HepG2 (cell line): ENCODE measurements at regions of chr3 and their contacts with region 1.

Region 1: GRCh38 chr3:128725932-128726690 is at the start of gene RAB7A:
- DNase-seq: peak; percentile 94
- ATAC-seq: peak; percentile 96
- H3K4me3 ChIP-seq: peak within 1 kb of the TSS; percentile 83 to 93 (median 92)
- H3K27ac ChIP-seq: peak within 1 kb of the TSS; percentile 84
- H3K4me1 ChIP-seq: peaks cover 53% of the 10 kb centered on the region
- H3K27me3 ChIP-seq: peaks cover 0 to 5% of the 10 kb centered on the region in 2 experiments; a peak in 1 of 5 replicates
- CTCF ChIP-seq: 0 out of 2 replicates have a peak, but pooled peaks have one; percentile 10
- EP300 ChIP-seq: no peak
- POLR2A ChIP-seq: peak; percentile 88 to 96
- RAD21 ChIP-seq: peak; percentile 32; the same call in 1 of the 2 replicates
- total RNA-seq, gene RAB7A: 26.5 and 49.0 TPM in 2 replicates

Region 2: DNA sequence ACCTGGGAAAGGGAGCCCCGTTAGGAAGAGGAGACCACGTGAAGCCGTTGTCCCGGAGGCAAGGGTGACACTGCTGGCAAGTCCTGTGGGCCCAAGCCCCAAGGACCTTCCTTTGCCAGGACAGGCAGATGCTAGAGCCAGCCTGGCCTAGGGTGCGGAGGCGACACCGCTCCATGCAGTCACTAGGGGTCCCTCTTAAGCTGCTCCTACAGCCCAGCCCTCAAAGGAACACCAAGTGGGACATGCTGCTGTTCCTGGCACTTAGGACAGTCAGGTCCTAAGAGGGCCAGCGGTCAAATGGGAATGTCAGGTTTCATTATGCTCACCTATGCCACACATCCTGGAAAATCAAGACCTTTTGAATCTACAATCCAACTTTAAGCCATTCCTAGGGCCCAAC is 135.2 kb before region 1 on chr3:
- CTCF ChIA-PET with region 1: no interaction called
- POLR2A ChIA-PET with region 1: no interaction called
- in situ Hi-C with region 1: no loop called
- intact Hi-C with region 1: no loop called
- DNase-seq: peak; percentile 58
- ATAC-seq: peak; percentile 98
- H3K4me3 ChIP-seq: no peak overlapping the region
- H3K27ac ChIP-seq: no peak overlapping the region
- H3K4me1 ChIP-seq: peaks cover 19% of the 10 kb centered on the region
- H3K27me3 ChIP-seq: peaks cover 0 to 2% of the 10 kb centered on the region in 2 experiments; a peak in 2 of 5 replicates
- CTCF ChIP-seq: peak; percentile 97
- EP300 ChIP-seq: no peak
- POLR2A ChIP-seq: no peak
- RAD21 ChIP-seq: peak; percentile 91

Region 3: DNA sequence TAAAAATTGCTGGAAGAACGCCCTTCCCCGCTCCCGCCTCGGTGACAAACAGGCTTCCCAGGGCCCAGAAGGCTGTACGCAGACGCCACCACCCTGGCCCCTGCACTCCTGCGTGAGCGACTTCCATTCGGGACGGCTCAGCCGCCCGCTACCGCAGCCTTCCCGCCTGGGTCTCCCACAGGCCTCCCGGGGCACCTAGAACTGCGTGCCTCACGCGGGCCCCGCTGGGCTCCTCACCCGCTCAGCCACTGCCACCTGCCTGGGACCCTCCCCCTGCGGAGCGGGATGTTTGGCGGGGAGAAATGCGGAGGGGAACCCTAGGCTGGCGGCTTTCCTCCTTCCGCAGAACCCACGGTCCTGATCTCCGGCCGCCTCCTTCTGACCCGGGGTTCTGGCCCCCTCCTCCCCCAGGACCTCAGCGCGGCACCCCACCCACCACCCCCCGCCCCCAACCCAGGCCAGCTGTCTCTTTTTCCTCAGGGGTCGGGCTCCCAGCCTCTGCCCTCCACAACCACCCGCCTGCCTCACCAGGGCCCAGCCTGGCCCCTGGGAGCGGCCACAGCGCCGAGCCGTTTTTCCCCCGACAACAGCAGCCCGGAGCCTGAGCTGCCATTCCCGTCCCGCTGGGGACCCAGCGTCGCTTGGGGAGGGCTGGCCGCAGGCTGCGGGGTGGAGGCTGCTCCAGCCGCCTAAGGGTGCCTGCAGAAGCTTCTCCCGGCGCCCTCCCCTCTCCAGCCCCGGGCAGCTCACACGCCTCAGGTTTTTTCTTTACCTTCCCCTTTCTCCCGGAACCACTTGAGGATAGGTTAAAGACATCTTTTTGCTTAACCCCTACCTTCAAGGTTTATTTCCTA is 27.7 kb before region 1 on chr3:
- CTCF ChIA-PET with region 1: no interaction called
- POLR2A ChIA-PET with region 1: no interaction called
- in situ Hi-C with region 1: no loop called
- intact Hi-C with region 1: no loop called
- DNase-seq: no peak
- ATAC-seq: peak; percentile 89
- H3K4me3 ChIP-seq: peak overlapping the region in 2 of 3 experiments; percentile 48 to 68; a peak in 4 of 6 replicates
- H3K27ac ChIP-seq: no peak overlapping the region
- H3K4me1 ChIP-seq: peaks cover 4% of the 10 kb centered on the region
- H3K27me3 ChIP-seq: peaks cover 0 to 9% of the 10 kb centered on the region in 2 experiments; a peak in 1 of 5 replicates
- CTCF ChIP-seq: no peak
- EP300 ChIP-seq: no peak
- POLR2A ChIP-seq: no peak
- RAD21 ChIP-seq: no peak

Region 4: GRCh38 chr3:128784232-128784631 is 58.1 kb after region 1 on chr3:
- CTCF ChIA-PET with region 1: no interaction called
- POLR2A ChIA-PET with region 1: no interaction called
- in situ Hi-C with region 1: no loop called
- intact Hi-C with region 1: loop called (anchors 5 kb)
- DNase-seq: peak; percentile 9
- ATAC-seq: peak; percentile 84
- H3K4me3 ChIP-seq: no peak overlapping the region
- H3K27ac ChIP-seq: no peak overlapping the region
- H3K4me1 ChIP-seq: peaks cover 57% of the 10 kb centered on the region
- H3K27me3 ChIP-seq: no peaks in the 10 kb centered on the region
- CTCF ChIP-seq: peak; percentile 66
- EP300 ChIP-seq: no peak
- POLR2A ChIP-seq: no peak
- RAD21 ChIP-seq: no peak